WTC11 (cell line): ENCODE measurements at regions of chr17 and their contacts with region 1.

Region 1: DNA sequence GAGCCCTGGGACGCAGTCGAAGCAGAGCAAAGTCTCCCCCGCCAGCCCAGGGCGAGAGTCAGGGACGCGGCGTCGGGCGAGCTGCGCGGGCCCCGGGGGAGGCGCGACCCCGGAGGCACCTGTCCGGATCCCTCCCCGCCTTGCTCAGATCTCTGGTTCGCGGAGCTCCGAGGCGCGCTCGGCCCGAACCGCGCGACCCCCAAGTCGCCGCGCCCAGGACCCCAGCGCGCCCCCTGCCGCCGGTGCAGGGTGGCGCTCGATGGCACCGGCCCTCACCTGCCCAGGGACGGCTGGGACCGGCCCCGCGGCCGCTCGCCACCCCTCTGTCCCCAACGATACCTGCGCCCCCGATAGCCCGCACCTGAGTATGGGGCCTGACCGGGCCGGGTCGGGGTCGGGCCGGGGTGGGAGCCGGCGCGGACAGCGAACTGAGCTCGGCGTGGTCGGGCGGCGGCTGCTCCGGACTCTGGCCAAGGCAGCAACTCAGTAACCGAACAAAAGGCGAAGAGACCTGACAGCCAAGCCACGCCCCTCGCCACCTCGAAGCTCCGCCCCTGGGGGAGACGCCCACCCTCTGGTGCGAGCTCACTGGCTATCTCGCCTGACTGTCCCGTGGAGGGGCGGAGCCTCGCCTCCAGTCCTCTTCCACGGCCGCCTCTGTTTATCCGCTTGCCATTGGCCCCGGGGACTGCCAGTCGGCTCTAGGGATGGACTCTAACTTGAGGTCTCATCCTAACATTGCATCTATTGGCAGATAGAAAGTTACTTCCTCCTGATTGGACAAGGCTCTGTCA is at the start of gene JUP:
- DNase-seq: peak; percentile 100
- ATAC-seq: peak; percentile 93
- H3K4me3 Mint-ChIP-seq: peak within 1 kb of the TSS; percentile 88
- H3K27ac Mint-ChIP-seq: peak within 1 kb of the TSS; percentile 92
- H3K4me1 Mint-ChIP-seq: peaks cover 42% of the 10 kb centered on the region
- H3K27me3 Mint-ChIP-seq: no peaks in the 10 kb centered on the region; the same call in 1 of the 2 replicates
- CTCF ChIP-seq: peak; percentile 86
- total RNA-seq, gene JUP: 93.5 to 103 TPM (median 100 TPM) in 3 replicates

Region 2: DNA sequence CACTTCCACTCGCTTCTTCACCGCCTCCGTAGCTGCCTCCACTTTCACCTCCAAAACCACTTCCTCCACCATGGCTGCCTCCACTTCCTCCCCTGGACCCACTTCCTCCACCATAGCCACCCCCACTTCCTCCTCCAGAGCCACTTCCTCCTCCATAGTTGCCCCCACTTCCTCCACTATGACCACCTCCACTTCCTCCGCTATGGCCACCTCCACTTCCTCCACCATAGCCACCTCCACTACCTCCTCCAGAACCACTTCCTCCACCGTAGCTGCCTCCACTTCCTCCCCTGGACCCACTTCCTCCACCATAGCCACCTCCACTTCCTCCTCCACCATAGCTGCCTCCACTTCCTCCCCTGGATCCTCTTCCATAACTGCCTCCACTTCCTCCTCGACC is 219.1 kb before region 1 on chr17:
- CTCF ChIA-PET with region 1: no interaction called
- POLR2A ChIA-PET with region 1: no interaction called
- DNase-seq: no peak
- ATAC-seq: no peak
- H3K4me3 Mint-ChIP-seq: no peak overlapping the region
- H3K27ac Mint-ChIP-seq: no peak overlapping the region
- H3K4me1 Mint-ChIP-seq: no peaks in the 10 kb centered on the region
- H3K27me3 Mint-ChIP-seq: peaks cover 22% of the 10 kb centered on the region
- CTCF ChIP-seq: no peak

Region 3: DNA sequence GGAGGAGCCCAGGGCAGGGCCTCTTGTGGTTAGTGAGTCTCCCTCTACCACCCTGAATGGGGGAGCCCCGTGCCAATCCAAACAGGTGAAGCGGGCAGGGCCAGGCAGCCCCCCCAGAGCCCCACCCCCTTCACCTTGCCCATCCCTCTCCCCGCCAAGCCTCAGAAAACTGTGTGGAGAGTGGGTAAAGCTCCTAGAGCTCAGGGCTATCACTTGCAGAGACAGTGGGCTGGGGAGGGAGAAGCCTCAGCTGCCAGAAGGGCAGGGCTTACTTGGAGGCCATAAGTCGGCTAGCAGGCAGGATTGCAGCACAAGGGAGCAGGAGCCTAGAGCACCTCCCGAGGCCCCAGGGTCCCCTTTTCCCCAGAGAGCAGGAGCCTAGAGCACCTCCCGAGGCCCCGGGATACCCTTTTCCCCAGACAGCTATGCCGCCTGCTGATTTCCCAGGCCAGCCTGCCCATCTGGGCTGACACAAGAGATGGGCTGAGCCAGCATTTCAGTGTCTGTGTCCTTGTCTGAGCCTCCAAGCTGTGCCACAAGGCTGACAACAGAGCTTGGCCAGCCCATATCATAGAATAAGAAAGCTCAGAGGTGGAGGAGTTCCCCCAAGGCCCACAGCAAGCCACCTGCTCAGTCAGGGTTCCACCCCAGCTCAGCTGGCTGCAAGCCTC is 193.0 kb before region 1 on chr17:
- CTCF ChIA-PET with region 1: no interaction called
- POLR2A ChIA-PET with region 1: no interaction called
- DNase-seq: no peak
- ATAC-seq: no peak
- H3K4me3 Mint-ChIP-seq: no peak overlapping the region
- H3K27ac Mint-ChIP-seq: no peak overlapping the region
- H3K4me1 Mint-ChIP-seq: peaks cover 3% of the 10 kb centered on the region
- H3K27me3 Mint-ChIP-seq: no peaks in the 10 kb centered on the region; the same call in 1 of the 2 replicates
- CTCF ChIP-seq: no peak

Region 4: GRCh38 chr17:41695954-41696756 is 90.3 kb before region 1 on chr17:
- CTCF ChIA-PET with region 1: interaction called, 25 read pairs
- POLR2A ChIA-PET with region 1: interaction called, 30 read pairs
- DNase-seq: peak; percentile 64
- ATAC-seq: peak; percentile 12; the same call in 1 of the 2 replicates
- H3K4me3 Mint-ChIP-seq: no peak overlapping the region
- H3K27ac Mint-ChIP-seq: no peak overlapping the region
- H3K4me1 Mint-ChIP-seq: peaks cover 3% of the 10 kb centered on the region; the same call in 1 of the 2 replicates
- H3K27me3 Mint-ChIP-seq: peaks cover 25% of the 10 kb centered on the region
- CTCF ChIP-seq: peak; percentile 76

Region 5: DNA sequence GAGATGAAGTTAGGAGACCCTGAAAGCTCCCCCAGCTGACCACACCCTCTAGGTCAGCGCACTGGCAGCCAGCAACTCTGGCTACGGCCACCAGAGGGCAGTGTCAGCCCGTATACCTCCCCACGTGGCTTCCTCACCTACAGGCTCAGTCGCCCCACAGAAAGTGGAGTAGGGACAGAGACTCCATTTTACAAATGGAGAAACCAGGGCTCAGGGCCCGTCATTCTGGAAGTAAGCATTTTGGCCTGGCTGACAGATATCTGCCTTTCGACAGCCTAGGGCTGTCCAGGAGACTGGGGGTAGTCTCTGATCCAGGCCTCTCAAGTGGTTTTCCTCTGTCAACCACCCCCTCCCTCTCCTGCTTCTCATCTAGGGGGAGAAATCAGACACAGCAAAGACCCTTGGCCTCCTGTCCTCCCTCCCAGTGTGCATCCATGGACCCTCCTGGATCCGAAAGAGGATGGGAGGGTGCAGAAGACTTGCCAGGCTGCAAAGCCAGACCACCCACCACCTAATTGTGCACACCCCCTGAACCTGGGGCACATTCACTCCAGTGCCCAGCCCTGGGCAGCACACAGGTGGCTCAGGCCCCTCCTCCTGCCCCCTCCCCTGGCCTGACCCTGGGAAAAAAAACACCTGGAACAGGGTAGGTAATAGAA is 48.2 kb before region 1 on chr17:
- CTCF ChIA-PET with region 1: interaction called, 37 read pairs
- POLR2A ChIA-PET with region 1: interaction called, 15 read pairs
- DNase-seq: peak; percentile 91
- ATAC-seq: peak; percentile 71
- H3K4me3 Mint-ChIP-seq: no peak overlapping the region
- H3K27ac Mint-ChIP-seq: peak overlapping the region; percentile 82
- H3K4me1 Mint-ChIP-seq: peaks cover 22% of the 10 kb centered on the region
- H3K27me3 Mint-ChIP-seq: peaks cover 47% of the 10 kb centered on the region
- CTCF ChIP-seq: peak; percentile 98

Region 6: DNA sequence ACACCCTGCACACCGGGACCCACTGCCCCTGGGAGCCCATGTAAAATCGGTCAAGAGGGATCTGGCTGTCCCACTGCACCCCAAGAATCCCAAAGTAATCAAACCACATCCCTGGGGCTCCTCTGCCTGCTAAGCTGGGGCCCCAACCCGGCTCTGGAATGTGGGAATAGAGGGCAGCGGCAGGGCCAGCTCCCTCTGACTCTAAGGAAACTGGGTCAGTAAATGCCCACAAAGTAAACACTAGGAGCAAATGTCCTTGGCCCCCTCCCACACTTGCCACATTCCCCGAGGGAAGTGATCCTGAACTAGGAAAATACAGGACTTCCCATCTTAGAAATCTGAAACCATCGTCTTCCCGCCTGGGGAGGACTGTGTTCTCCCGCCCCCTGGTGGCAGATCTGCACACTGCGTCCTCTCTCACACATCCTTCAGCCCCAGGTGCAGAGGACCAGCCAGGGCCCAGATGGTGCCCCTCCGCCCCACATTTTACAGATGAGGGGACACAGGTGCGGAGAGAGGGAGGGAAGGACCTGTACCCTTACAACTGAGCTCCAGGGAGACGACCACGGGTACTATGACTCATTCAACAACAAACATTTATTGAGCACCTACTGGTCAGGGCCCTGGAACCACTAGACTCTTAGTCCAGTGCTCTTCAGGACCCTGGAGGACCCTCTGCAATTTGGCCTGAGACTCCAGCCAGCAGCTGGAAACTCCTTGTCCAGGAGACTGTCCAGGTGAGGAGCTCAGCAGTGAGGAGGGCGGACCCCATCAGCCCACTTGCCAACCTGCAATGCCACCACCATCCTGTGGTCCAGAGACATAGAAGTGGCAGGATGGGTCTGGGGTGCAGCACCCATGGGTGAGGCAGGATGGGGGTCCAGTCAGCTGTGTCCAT is 15.2 kb after region 1 on chr17:
- CTCF ChIA-PET with region 1: interaction called, 252 read pairs
- POLR2A ChIA-PET with region 1: interaction called, 142 read pairs
- DNase-seq: peak; percentile 94
- ATAC-seq: peak; percentile 54
- H3K4me3 Mint-ChIP-seq: peak overlapping the region; percentile 66
- H3K27ac Mint-ChIP-seq: peak overlapping the region; percentile 97
- H3K4me1 Mint-ChIP-seq: peaks cover 26% of the 10 kb centered on the region
- H3K27me3 Mint-ChIP-seq: no peaks in the 10 kb centered on the region
- CTCF ChIP-seq: peak; percentile 97

Region 7: GRCh38 chr17:41818024-41818423 is 31.6 kb after region 1 on chr17:
- CTCF ChIA-PET with region 1: interaction called, 91 read pairs
- POLR2A ChIA-PET with region 1: interaction called, 62 read pairs
- DNase-seq: no peak
- ATAC-seq: no peak
- H3K4me3 Mint-ChIP-seq: no peak overlapping the region
- H3K27ac Mint-ChIP-seq: no peak overlapping the region
- H3K4me1 Mint-ChIP-seq: peaks cover 27% of the 10 kb centered on the region
- H3K27me3 Mint-ChIP-seq: no peaks in the 10 kb centered on the region; the same call in 1 of the 2 replicates
- CTCF ChIP-seq: no peak

Region 8: GRCh38 chr17:41864836-41865595 is 78.6 kb after region 1 on chr17 and contains the start of gene KLHL11:
- CTCF ChIA-PET with region 1: interaction called, 11 read pairs
- POLR2A ChIA-PET with region 1: interaction called, 20 read pairs
- DNase-seq: peak; percentile 91
- ATAC-seq: peak; percentile 88
- H3K4me3 Mint-ChIP-seq: no peak within 1 kb of the TSS; the same call in 1 of the 2 replicates
- H3K27ac Mint-ChIP-seq: peak within 1 kb of the TSS; percentile 97
- H3K4me1 Mint-ChIP-seq: peaks cover 23% of the 10 kb centered on the region
- H3K27me3 Mint-ChIP-seq: no peaks in the 10 kb centered on the region
- CTCF ChIP-seq: no peak
- total RNA-seq, gene KLHL11: 13.4 to 15.0 TPM (median 14.7 TPM) in 3 replicates

Region 9: GRCh38 chr17:41959336-41960095 is 173.1 kb after region 1 on chr17:
- CTCF ChIA-PET with region 1: interaction called, 12 read pairs
- POLR2A ChIA-PET with region 1: interaction called, 9 read pairs
- DNase-seq: peak; percentile 61
- ATAC-seq: peak; percentile 84
- H3K4me3 Mint-ChIP-seq: no peak overlapping the region
- H3K27ac Mint-ChIP-seq: peak overlapping the region; percentile 73
- H3K4me1 Mint-ChIP-seq: peaks cover 30% of the 10 kb centered on the region
- H3K27me3 Mint-ChIP-seq: peaks cover 2% of the 10 kb centered on the region; the same call in 1 of the 2 replicates
- CTCF ChIP-seq: no peak